ENCODE measurements at regions of chr20 and their contacts with region 1.

Region 1: DNA sequence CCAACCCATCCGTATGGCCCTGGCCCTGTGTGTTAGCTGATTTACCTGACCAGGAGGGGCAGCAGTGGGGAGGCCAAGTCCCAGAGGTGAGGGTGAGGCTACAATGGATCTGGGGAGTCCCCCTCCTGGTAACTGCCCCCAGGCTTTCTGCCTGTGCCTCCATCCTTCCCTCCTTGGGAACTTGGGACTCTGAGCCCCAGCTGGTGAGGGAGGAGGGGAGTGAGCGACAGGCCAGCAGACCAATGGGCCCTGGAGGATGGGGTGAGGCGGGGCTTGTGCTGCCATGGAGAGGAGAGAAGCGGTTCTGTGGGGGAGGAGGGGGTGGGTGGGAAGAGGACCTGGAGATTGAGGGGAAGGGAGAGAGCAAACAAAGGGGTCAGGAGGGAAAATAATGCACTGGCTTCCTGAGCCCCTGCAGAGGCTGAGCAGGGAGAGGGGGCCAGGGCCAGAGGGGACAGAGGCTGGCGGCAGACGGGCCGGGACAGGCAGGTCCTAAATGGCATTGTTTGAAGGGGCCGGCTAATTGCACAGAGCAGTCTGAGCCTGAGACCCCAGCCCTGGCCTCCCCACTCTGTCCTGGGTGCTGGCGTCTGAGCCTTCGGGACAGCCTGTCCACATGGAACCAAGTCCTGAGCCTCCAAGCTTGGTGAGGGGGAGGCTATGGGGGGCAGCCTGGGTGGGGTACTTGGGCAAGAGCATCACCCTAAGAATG is 17.5 kb downstream of the DNMT3B start:
- DNase-seq: no peak
- H3K4me3 ChIP-seq: no peak overlapping the region
- H3K27ac ChIP-seq: no peak overlapping the region
- H3K4me1 ChIP-seq: no peaks in the 10 kb centered on the region
- H3K27me3 ChIP-seq: no peaks in the 10 kb centered on the region
- CTCF ChIP-seq: no peak
- EP300 ChIP-seq: no peak
- POLR2A ChIP-seq: no peak

Region 2: DNA sequence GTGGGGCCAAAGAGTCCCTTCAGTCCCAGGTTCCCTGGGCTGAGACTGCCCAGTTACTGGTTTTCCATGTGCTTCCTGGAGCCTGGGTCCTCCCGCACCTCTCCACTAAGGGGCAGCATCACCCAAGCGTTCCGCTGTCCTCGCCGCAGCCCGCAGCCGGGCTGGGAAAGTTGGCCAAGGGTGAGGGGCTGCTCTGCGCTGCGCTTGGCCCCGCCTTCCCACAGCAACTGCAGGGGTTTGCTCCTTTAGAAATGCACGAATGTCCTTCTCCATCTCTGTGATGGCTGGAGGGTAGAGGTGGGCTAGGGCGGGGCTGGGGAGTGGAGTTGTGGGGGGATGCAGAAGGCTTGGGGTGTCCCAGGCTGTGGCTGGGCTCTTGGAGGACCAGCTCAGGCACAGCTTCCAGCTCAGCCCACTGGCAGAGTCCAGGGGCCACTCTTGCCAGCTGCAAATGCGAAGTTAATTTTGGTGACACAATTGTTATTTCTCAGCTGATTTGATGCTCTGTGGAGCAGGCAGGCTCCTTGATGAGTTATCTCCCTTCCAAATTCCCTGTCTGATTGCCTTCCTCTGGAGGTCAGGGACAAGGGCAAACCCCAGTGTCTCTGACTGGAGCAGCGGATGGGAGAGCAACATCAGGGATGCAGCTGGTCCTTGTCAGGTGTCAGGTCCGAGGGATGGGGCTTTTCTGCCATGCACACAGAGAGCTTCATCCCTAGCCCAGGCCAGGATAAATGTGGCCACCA is 257.7 kb before region 1 on chr20:
- intact Hi-C with region 1: loop called in 1 of 4 experiments (anchors 5 kb)
- DNase-seq: peak; percentile 46 to 79 (median 71)
- H3K4me3 ChIP-seq: no peak overlapping the region
- H3K27ac ChIP-seq: no peak overlapping the region
- H3K4me1 ChIP-seq: peaks cover 2% of the 10 kb centered on the region
- H3K27me3 ChIP-seq: no peaks in the 10 kb centered on the region
- CTCF ChIP-seq: peak; percentile 66 to 77 (median 75)
- EP300 ChIP-seq: no peak
- POLR2A ChIP-seq: no peak

Region 3: GRCh38 chr20:32674362-32674789 is 105.3 kb before region 1 on chr20:
- intact Hi-C with region 1: loop called in 1 of 4 experiments (anchors 10 kb)
- DNase-seq: no peak
- H3K4me3 ChIP-seq: no peak overlapping the region
- H3K27ac ChIP-seq: no peak overlapping the region
- H3K4me1 ChIP-seq: no peaks in the 10 kb centered on the region
- H3K27me3 ChIP-seq: no peaks in the 10 kb centered on the region
- CTCF ChIP-seq: no peak
- EP300 ChIP-seq: no peak
- POLR2A ChIP-seq: no peak

Region 4: DNA sequence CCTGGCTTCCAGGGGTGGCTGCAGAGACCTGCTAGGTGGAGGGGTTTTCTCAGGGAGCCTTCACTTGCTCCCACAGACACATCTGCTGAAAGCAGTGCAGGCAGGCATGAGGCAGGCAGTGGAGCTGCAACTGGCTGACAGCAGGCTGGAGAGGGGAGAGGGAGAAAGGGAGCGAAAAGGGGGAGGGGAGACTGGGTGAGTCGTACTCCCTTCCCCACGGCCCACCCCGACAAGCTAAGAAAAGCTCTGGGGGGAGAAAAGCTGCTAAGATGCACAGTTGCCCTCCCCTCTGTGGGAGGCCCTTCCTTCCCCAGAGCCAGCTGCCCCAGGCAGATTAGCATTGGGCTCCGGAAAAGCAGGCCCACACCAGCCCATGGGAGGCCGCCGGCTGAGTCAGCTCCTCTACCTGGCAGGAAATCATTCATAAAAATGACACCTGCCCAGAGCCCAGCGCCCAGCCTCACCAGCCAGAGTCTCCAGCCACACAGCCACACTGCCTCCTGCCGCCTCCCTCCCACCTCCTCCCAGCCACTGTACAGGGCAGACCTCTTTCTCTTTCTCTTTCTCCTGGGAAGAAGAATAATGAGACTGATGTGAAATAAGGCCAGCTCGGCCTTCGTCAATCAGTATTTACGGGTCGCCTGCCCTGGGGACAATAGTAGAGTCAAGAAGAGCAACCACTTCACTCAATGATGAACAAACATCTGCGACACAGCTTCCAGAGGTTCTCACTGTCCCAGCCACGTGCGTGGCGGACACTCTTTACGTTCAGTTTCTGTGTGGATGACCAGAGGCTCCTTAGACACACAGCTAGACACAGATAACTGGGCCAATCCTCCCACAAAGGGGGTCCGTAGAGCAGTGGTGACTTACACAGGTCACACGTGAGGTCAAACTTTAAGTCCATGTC is 98.2 kb before region 1 on chr20:
- intact Hi-C with region 1: loop called in 2 of 4 experiments (anchors 10 kb)
- DNase-seq: no peak
- H3K4me3 ChIP-seq: no peak overlapping the region
- H3K27ac ChIP-seq: no peak overlapping the region
- H3K4me1 ChIP-seq: no peaks in the 10 kb centered on the region
- H3K27me3 ChIP-seq: no peaks in the 10 kb centered on the region
- CTCF ChIP-seq: no peak
- EP300 ChIP-seq: no peak
- POLR2A ChIP-seq: no peak

Region 5: DNA sequence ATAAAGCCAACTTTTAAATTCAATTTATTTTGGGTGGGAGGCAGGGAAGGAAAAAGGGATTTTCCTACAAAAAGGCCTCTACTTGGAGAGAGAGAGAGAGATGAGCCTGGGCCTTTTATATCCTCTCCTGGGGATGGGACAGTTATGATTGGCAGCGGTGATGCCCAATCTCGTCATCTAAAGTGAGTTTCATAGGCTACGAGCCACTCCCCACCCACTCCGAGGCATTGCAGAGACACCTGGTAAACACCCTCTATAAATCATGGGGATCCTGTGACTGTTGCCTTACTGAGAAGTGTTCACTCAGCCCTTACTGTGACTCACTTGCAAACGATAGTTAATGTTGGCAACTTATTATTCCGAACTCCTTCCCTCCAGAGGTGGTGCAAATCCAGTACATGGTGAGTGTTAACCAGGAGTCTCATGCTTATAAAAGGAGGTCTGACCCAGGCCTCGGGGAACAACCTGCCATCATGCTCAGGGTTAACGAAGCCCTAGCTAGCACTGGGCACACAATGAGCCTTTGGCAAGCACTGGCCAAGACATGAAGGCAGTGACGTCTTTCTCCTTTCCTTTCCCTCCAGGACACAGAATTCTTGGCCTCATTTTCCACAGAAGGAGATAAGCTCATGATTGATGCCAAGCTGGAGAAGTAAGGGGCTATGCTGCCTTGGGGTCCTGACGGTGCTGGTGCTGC is 320.3 kb after region 1 on chr20:
- intact Hi-C with region 1: no loop called
- DNase-seq: no peak
- H3K4me3 ChIP-seq: no peak overlapping the region
- H3K27ac ChIP-seq: no peak overlapping the region
- H3K4me1 ChIP-seq: no peaks in the 10 kb centered on the region
- H3K27me3 ChIP-seq: no peaks in the 10 kb centered on the region
- CTCF ChIP-seq: no peak
- EP300 ChIP-seq: no peak
- POLR2A ChIP-seq: no peak

Measured in ovary (tissue), 10 donors.